Sigmoid colon (tissue), 7 donors: ENCODE measurements at regions of chr1 and their contacts with region 1.

Region 1: DNA sequence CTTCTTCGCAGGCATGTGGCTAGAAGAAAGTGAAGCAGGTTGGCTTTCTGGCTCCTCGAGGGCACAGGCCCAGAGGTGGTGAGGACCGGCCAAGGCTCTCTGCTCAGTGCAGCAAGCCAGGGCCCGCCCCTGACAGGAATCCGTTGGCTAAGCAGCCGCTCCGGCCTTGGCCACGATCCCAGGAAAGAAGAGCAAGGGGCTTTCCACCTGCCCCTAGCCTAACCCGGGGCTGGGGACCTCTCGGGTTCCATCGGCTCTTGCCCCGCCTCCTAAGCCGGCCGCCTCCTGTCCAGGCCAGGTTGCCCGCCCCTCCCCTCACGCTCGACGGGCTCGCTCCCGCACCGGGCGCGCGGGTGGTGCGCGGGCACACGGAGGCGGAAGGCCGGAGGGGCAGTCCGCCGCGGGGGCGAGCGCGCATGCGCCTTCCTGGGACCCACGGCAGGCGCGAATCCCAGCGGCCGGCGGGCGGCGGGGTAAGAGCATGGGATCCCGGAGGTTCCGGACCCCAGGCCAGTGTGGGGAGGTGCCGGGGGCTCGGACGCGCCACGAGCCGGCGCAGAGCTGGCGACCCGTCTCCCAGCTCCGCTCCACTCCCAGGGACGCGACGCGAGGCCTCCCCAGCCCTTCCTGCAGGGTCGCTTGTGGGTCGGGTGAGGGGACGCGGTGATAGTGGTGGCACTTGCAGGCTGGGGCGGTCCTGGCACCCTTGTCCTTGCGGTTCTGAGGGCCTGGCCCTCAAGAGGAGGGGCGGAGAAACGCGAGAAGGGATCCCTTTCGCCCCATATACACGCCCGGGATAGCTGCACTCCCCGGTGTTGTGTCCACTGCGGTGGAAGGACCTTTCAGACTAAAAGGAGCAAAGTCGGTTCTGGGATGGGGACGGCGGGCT is at the start of gene ALG6:
- DNase-seq: peak; percentile 94
- H3K4me3 ChIP-seq: peak within 1 kb of the TSS; percentile 81 to 90 (median 88)
- H3K27ac ChIP-seq: peak within 1 kb of the TSS; percentile 85 to 87 (median 86)
- H3K4me1 ChIP-seq: peaks cover 0 to 16% (median 10%) of the 10 kb centered on the region in 4 donors
- H3K27me3 ChIP-seq: no peaks in the 10 kb centered on the region
- CTCF ChIP-seq: peak in 1 of 4 experiments; percentile 9
- EP300 ChIP-seq: no peak
- POLR2A ChIP-seq: peak in 1 of 2 donors; percentile 36
- total RNA-seq, gene ALG6: 6.2 to 11.4 (median 7.1) TPM

Region 2: DNA sequence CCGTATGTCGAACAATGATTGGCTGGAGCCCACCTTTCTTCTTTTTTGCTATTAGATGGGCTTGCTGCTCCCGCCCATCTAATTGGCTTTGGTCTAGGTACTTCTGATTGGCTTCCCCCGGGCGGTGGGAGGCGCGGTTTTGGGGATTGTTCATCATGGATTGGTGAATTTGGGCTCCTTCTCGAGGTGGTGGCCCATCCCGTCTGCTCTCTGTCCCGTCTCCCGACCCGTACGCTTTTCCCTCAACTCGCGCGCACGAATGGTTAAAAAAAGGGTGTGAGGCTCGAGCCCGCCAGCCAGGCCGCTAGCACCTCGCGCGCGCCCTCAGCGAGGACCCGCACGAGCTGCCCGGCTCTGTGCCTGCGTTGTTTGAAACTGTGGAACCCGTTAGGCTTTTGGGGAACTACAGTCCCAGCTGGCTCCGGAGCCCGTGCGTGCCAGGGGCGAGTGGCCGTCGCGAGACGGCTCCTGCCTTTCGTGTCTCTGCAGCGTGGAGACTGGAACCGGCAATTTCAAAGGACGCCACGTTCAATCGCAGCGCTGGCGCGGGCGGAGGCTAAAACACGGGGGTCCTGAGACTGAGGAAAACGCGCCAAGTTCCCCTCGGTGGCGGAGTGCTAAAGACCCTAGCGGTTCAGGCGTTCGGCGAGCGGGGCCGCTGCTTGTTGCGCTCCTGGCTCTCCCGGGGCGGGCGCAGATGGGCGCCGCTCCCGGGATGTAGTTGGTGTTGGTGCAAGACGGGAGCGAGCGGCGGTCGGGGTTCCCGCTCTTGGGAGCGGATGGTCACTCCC is 930.8 kb before region 1 on chr1 and contains the start of gene USP1:
- intact Hi-C with region 1: loop called (anchors 10 kb)
- DNase-seq: peak; percentile 99
- H3K4me3 ChIP-seq: peak within 1 kb of the TSS; percentile 83 to 96 (median 88)
- H3K27ac ChIP-seq: peak within 1 kb of the TSS; percentile 92 to 100 (median 98)
- H3K4me1 ChIP-seq: peaks cover 0 to 40% (median 31%) of the 10 kb centered on the region in 4 donors
- H3K27me3 ChIP-seq: no peaks in the 10 kb centered on the region
- CTCF ChIP-seq: no peak
- EP300 ChIP-seq: no peak
- POLR2A ChIP-seq: no peak
- total RNA-seq, gene USP1: 20.5 to 35.7 (median 27.6) TPM

Region 3: DNA sequence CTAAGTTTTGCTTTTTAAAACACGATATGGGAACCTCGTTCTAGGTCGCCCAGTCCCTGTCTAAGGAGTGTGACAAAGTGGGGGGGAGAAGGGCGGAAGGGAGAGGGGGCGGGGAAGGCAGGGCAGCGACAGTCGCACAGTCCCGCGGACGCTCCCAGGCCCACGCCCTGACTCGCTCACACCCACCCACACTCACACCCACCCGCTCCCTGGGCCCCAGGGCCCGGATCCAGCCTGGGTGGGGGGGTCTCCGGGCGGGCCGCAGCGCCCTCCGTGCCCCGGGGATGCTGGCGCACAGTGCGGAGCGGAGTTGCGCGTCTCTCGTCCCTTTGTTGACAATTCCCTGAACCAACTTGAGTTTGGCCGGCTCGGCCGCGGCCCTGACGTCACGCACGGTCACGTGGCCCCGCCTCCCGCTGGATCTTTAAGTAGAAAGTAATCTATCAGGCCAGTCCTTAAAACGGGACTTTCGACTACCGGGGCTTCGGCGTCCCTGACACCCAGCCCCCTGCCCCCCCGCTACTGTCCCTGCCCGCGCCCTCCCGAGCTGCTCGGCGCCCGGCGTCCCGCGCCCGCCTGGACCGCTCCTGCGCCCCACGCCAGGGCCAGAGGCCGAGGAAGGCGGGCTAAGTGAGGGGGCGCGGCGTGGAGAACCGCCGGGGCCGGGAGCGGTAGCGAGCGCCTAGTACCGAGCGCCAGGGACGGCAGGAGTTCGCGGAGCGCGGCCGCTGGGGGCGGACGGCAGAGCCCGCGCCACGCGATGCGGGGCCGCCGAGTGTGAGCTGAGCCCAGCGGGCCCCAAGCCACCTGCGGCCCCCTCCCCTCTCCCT is 45.1 kb before region 1 on chr1 and contains the start of gene FOXD3:
- intact Hi-C with region 1: loop called (anchors 2 kb)
- DNase-seq: peak; percentile 85
- H3K4me3 ChIP-seq: peak within 1 kb of the TSS; percentile 31 to 54 (median 46)
- H3K27ac ChIP-seq: peak within 1 kb of the TSS; percentile 36 to 59 (median 54)
- H3K4me1 ChIP-seq: peaks cover 0 to 55% (median 36%) of the 10 kb centered on the region in 4 donors
- H3K27me3 ChIP-seq: peaks cover 85 to 100% (median 100%) of the 10 kb centered on the region in 3 donors
- CTCF ChIP-seq: no peak
- EP300 ChIP-seq: no peak
- POLR2A ChIP-seq: no peak
- total RNA-seq, gene FOXD3: 3.1 to 5.0 (median 4.1) TPM

Region 4: DNA sequence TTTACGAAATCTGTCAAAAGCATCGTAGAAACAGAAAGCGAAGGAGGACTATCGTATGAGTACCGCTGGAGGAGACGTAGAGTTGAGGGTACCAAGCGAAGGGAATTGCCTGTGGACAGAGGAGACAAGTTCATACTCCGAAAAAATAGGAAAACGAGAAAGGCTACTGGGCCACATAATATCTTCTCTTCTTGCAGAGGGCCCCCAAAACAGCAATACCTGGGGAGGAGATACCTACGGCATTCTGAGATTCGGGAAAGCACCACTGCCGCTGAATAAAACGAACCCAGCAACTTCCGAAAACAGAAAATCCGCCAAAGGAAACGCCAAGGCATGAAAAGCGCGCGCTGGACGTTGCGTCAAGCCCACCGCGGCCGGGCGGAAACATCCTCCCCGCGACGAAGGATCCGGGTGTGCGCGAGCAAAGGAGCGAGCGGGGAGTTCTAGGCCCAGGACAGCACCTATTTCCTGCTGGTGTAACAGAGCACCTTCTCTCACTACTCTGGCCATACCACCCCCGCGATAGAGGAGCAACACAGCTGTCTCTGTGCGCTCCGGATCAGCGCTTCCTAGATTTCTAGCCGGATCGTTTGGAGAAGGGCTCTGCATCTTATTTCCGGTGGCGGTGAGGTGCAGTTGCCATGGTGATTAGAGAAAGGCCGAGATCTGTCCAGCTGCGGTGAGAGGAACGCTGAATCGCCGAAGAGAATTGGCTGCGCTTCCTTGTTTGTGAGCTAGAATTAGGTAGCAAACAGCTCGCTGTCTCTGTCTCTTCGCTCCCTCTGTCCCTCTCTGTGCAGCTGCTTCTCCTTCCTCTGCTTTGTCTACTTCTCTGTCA is 155.7 kb after region 1 on chr1 and contains the starts of genes EFCAB7 and ITGB3BP:
- intact Hi-C with region 1: loop called (anchors 2 kb)
- DNase-seq: peak; percentile 93
- H3K4me3 ChIP-seq: peak within 1 kb of the TSS; percentile 65 to 70 (median 66)
- H3K27ac ChIP-seq: peak within 1 kb of the TSS; percentile 86 to 92 (median 90)
- H3K4me1 ChIP-seq: peaks cover 0 to 20% (median 19%) of the 10 kb centered on the region in 4 donors
- H3K27me3 ChIP-seq: no peaks in the 10 kb centered on the region
- CTCF ChIP-seq: no peak
- EP300 ChIP-seq: no peak
- POLR2A ChIP-seq: no peak
- total RNA-seq, gene EFCAB7: 6.9 to 12.8 (median 10.4) TPM
- total RNA-seq, gene ITGB3BP: 9.4 to 25.3 (median 15.1) TPM

Region 5: DNA sequence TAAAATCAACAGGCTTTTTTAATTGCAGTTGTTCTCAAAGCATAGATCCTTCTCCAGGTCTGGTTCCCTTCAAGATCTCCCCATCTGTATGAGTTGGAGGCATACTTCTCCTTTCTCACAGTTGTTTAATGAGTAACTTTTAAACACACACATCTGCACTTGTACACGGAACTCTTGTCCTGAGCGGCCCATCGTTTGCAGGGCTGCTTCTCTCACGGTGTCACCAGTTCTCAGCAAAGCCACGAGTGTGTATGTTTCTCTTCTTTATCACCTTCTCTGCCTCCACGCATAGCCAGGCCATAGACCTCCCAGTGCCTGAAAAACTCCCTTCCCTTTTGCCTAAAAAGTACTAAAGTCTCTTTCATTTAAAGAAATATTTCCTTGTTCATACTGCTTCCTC is 337.6 kb after region 1 on chr1:
- intact Hi-C with region 1: no loop called
- DNase-seq: peak; percentile 38
- H3K4me3 ChIP-seq: no peak overlapping the region
- H3K27ac ChIP-seq: no peak overlapping the region
- H3K4me1 ChIP-seq: peaks cover 0 to 15% (median 4%) of the 10 kb centered on the region in 4 donors
- H3K27me3 ChIP-seq: no peaks in the 10 kb centered on the region
- CTCF ChIP-seq: no peak
- EP300 ChIP-seq: no peak
- POLR2A ChIP-seq: no peak